Psoas muscle (tissue), 8 donors: ENCODE measurements at regions of chr4 and their contacts with region 1.

Region 1: DNA sequence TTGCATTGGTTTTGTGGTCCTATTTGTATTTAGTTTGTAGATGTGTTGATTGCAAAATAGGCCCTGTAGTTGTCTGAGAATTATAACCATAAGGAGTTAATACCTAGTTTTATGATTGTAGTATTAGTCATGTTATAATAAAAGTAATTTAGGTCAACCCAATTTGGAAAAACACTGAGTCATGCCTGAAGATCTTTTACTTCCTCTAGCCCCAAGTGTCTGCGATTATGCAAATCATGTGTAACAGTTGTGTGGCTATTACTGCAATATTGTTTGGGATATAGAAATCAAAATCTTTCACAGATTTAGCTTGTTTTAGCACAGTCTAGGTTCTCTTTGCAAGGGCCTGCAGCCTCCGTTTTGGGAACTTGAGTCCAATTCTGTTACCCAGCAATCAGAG is 12.6 kb downstream of the SRD5A3 start:
- DNase-seq: no peak
- ATAC-seq: peak; percentile 78 to 93 (median 88)
- H3K4me3 ChIP-seq: no peak overlapping the region
- H3K27ac ChIP-seq: peak overlapping the region; percentile 70
- H3K4me1 ChIP-seq: peaks cover 17% of the 10 kb centered on the region
- H3K27me3 ChIP-seq: no peaks in the 10 kb centered on the region
- CTCF ChIP-seq: no peak

Region 2: DNA sequence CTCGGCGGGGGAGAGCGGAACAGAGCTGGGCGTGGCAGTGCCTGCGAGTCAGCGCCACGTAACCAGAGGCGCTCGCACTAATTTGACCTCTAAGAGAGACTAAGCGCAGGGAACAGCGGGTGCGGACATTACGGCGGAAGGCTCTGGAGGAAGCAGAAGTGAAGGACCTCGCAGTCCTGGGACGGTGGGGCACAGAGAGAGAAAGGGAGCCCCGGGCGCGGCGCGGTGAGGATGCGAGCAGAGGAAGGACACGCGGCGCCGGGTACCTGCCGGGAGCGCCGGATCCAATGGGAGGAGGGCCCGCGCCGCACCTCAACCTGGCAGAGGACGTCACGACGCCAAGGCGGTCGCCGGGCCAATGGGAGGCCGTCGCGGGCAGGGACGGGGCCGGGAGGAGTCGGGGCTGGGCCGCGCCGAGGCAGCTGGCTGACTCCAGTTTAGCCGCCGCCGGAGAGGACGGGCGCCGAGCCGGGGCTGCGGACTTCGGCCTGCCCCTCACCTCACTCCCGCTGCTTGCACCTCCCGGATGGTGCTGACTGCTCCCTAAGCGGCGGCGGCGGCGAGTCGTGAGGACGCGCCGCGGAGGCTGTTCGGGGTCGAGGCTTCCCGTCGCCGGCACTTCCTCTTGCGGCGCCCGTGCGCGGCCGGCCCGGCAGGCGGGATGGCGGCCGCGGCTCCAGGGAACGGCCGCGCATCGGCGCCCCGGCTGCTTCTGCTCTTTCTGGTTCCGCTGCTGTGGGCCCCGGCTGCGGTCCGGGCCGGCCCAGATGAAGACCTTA is 37.0 kb after region 1 on chr4 and contains the start of gene TMEM165:
- intact Hi-C with region 1: loop called in 1 of 2 experiments (anchors 5 kb)
- DNase-seq: peak; percentile 91 to 94
- ATAC-seq: peak; percentile 97 to 99 (median 98)
- H3K4me3 ChIP-seq: peak within 1 kb of the TSS; percentile 92
- H3K27ac ChIP-seq: peak within 1 kb of the TSS; percentile 95
- H3K4me1 ChIP-seq: peaks cover 30% of the 10 kb centered on the region
- H3K27me3 ChIP-seq: no peaks in the 10 kb centered on the region
- CTCF ChIP-seq: no peak
- total RNA-seq, gene TMEM165: 16.0 to 42.4 (median 27.5) TPM

Region 3: DNA sequence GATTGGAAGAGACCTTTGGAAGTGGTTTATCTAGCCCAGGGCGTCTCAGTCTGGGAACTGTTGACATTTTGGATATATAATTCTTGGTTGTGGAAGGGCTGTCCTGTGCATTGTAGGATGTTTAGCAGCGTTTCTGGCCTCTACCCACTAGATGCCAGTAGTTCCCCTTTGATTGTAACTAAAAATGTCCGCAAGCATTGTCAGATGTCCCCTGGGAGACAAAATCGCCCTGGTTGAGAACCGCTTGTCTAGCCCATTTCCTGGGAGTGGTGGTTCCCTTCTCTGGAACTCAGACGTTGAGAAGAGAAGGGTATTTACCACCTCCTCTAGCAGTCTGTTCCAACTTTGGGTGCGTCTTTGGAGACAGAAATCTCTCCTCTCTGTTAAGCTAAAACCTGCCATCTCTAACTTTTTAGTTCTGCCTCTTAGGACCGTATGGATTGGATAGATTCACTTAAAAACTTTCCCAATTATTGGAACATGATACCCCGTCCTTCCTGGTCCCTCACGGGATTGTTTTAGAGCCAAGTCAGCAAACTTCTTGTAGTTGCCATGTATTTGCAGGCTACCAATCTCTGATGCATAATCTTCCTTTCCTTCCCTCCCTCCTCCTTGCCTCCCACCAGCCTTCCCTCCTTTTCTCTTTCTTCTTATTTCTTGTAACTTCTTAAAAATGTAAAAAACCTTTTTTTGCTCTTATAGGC is 51.0 kb after region 1 on chr4:
- intact Hi-C with region 1: no loop called
- DNase-seq: no peak
- ATAC-seq: peak in 3 of 4 donors; percentile 17 to 64 (median 44)
- H3K4me3 ChIP-seq: no peak overlapping the region
- H3K27ac ChIP-seq: no peak overlapping the region
- H3K4me1 ChIP-seq: peaks cover 4% of the 10 kb centered on the region
- H3K27me3 ChIP-seq: no peaks in the 10 kb centered on the region
- CTCF ChIP-seq: peak; percentile 12